CD8-positive, alpha-beta T cell (primary cell): ENCODE measurements at regions of chr7 and their contacts with region 1.

Region 1: DNA sequence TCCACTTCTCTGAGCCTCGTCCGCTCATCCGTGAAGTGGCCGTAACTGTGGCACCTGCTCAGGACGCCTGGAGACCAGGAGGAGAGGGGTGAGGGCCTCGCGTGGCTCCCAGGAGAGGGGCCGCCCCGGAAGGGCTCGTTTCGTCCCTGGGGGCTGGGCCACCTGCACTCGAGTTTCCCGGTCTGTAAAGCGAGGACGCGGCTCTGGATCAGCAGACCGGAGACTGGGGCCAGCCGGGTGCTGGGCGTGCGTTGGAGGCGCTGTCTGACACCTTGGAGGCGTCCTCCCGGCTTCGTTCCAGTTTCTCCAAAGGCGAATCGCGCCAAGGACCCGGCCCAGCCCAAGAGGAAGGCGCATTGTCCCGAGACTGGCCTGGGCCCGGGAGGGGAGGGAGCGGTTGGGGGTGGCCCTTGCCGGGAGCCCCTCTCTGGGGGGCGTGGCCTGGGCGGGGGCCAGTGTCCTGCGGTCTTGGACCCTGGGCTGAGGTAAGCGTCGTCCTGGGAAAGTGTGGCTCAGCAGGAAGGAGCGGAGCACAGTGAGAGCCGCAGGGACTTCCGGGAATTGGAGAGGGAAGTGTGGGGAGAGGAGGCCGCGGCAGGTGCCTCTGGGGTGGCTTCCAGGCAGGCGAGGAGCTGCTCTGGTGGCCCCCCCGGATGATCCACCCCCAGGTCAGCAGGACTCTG is 89.6 kb downstream of the FOXL3 start:
- DNase-seq: peak in 1 of 9 experiments; percentile 49
- ATAC-seq: no peak
- H3K4me3 ChIP-seq: peak overlapping the region; percentile 18 to 31
- H3K4me3 Mint-ChIP-seq: peak overlapping the region; percentile 63
- H3K27ac ChIP-seq: no peak overlapping the region
- H3K27ac Mint-ChIP-seq: no peak overlapping the region
- H3K4me1 ChIP-seq: peaks cover 30% of the 10 kb centered on the region
- H3K4me1 Mint-ChIP-seq: peaks cover 25% of the 10 kb centered on the region
- H3K27me3 ChIP-seq: no peaks in the 10 kb centered on the region
- H3K27me3 Mint-ChIP-seq: no peaks in the 10 kb centered on the region
- CTCF ChIP-seq: no peak

Region 2: GRCh38 chr7:362402-363096 is 17.0 kb before region 1 on chr7:
- CTCF ChIA-PET with region 1: interaction called, 5 read pairs
- POLR2A ChIA-PET with region 1: interaction called, 4 read pairs
- intact Hi-C with region 1: loop called in 1 of 2 experiments (anchors 1 kb)
- DNase-seq: peak in 8 of 9 experiments; percentile 41 to 84 (median 60)
- ATAC-seq: peak; percentile 43
- H3K4me3 ChIP-seq: peak overlapping the region; percentile 9 to 27
- H3K4me3 Mint-ChIP-seq: peak overlapping the region; percentile 80
- H3K27ac ChIP-seq: peak overlapping the region; percentile 19 to 67
- H3K27ac Mint-ChIP-seq: peak overlapping the region; percentile 92
- H3K4me1 ChIP-seq: peaks cover 78% of the 10 kb centered on the region
- H3K4me1 Mint-ChIP-seq: peaks cover 73% of the 10 kb centered on the region
- H3K27me3 ChIP-seq: no peaks in the 10 kb centered on the region
- H3K27me3 Mint-ChIP-seq: no peaks in the 10 kb centered on the region
- CTCF ChIP-seq: no peak

Region 3: DNA sequence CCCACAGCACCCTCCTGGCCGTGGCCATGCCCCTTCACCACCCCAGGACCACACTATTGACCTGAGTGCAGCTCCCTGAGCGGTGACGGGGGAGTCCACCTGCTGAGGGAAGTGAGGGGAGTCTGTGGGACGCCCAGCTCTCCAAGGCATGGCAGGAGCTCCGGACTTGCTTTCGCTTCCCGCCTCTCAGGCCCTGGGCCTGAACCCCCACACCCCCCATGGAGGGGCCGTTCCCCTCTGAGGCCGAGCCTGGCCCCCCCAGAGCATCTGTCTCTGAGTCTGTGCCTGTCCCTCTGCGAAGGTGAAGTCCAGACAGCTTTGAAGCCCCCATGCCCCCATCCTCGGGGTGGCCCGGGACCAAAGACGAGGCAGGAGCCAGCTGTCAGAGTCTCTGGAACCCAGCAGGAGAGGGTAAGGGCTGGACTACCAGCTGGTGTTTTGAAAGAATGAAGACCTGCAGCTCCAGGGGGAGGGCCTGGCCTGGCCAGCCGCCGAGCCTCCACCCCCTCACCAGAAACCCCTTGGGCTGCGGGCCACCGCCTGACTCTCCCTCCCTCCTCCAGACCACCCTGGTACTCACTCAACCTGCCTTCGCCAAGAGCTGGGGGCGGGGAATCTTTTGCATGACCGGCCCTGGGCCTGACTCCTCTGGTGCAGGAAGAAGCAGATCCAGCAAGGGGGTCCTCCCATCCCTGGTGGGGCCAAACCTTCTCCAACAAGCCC is 26.1 kb after region 1 on chr7:
- CTCF ChIA-PET with region 1: no interaction called
- POLR2A ChIA-PET with region 1: no interaction called
- intact Hi-C with region 1: no loop called
- DNase-seq: peak in 1 of 9 experiments; percentile 4
- ATAC-seq: no peak
- H3K4me3 ChIP-seq: no peak overlapping the region
- H3K4me3 Mint-ChIP-seq: no peak overlapping the region
- H3K27ac ChIP-seq: no peak overlapping the region
- H3K27ac Mint-ChIP-seq: no peak overlapping the region
- H3K4me1 ChIP-seq: no peaks in the 10 kb centered on the region
- H3K4me1 Mint-ChIP-seq: peaks cover 2% of the 10 kb centered on the region
- H3K27me3 ChIP-seq: no peaks in the 10 kb centered on the region
- H3K27me3 Mint-ChIP-seq: peaks cover 6% of the 10 kb centered on the region
- CTCF ChIP-seq: no peak

Region 4: GRCh38 chr7:415613-416525 is 36.3 kb after region 1 on chr7:
- CTCF ChIA-PET with region 1: no interaction called
- POLR2A ChIA-PET with region 1: no interaction called
- intact Hi-C with region 1: no loop called
- DNase-seq: no peak
- ATAC-seq: no peak
- H3K4me3 ChIP-seq: no peak overlapping the region
- H3K4me3 Mint-ChIP-seq: no peak overlapping the region
- H3K27ac ChIP-seq: no peak overlapping the region
- H3K27ac Mint-ChIP-seq: no peak overlapping the region
- H3K4me1 ChIP-seq: no peaks in the 10 kb centered on the region
- H3K4me1 Mint-ChIP-seq: no peaks in the 10 kb centered on the region
- H3K27me3 ChIP-seq: no peaks in the 10 kb centered on the region
- H3K27me3 Mint-ChIP-seq: no peaks in the 10 kb centered on the region
- CTCF ChIP-seq: no peak